ENCODE measurements at regions of chr19 and their contacts with region 1.

Region 1: DNA sequence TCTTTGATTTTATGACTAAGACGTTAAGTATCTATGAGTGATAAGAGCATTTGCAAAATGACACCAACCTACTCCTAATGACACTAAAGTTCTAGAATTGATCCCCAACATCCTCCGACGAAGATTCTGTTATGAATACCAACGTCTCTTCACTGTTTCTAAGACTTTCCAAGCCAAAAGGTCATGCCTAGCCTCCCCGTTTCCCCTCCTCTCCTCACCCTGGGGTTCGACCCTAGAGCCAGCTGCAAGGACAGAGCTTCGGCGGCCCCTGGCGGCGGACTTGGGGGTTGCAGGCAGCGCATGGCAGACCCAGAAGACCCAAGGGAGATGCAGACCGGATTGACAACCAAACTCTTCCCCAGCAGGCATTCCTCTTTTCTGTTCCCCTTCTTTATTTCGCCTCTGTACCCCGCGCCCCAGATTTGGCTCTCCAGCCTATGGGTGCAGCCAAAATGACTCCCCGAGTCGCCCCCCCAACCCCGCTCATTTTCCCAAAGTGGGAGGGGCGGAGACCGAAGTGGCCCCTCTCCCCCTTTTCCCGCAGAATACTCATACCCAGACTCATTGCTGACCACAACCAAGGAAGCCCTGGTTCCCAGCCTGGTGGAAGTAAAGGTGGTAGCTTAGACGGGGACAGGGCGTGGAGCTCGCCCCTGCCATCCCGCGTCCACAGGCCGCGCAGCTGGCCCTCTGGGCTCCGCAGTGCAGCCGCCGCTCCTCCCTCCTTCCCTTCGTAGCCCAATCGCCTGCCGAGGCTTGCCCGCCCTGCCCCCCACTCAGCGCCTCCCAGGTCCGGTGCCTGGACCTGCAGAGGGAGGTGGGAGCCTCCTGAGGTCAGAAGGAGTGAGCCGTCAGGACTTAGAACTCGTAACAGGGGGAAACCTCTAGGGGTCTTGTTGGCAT is 4.1 kb upstream of the EML2 start:
- DNase-seq: peak; percentile 81 to 93 (median 85)
- ATAC-seq: peak; percentile 46 to 62 (median 52)
- H3K4me3 ChIP-seq: peak overlapping the region in 5 of 12 donors; percentile 24 to 62 (median 60)
- H3K27ac ChIP-seq: peak overlapping the region in 2 of 12 donors; percentile 84 to 89
- H3K4me1 ChIP-seq: peaks cover 0 to 65% (median 35%) of the 10 kb centered on the region in 12 donors
- H3K27me3 ChIP-seq: peaks cover 0 to 16% (median 0%) of the 10 kb centered on the region in 9 donors
- CTCF ChIP-seq: peak; percentile 92 to 99 (median 98)
- POLR2A ChIP-seq: no peak

Region 2: GRCh38 chr19:45439569-45440254 is 203.6 kb before region 1 on chr19:
- intact Hi-C with region 1: loop called in 5 of 10 experiments (anchors 1 to 10 kb)
- DNase-seq: peak; percentile 89 to 94 (median 92)
- ATAC-seq: peak; percentile 52 to 84 (median 67)
- H3K4me3 ChIP-seq: peak overlapping the region; percentile 57 to 88 (median 69)
- H3K27ac ChIP-seq: peak overlapping the region; percentile 54 to 98 (median 95)
- H3K4me1 ChIP-seq: peaks cover 0 to 39% (median 22%) of the 10 kb centered on the region in 12 donors
- H3K27me3 ChIP-seq: no peaks in the 10 kb centered on the region
- CTCF ChIP-seq: peak; percentile 97 to 100 (median 100)
- POLR2A ChIP-seq: peak in 1 of 2 donors; percentile 52

Region 3: DNA sequence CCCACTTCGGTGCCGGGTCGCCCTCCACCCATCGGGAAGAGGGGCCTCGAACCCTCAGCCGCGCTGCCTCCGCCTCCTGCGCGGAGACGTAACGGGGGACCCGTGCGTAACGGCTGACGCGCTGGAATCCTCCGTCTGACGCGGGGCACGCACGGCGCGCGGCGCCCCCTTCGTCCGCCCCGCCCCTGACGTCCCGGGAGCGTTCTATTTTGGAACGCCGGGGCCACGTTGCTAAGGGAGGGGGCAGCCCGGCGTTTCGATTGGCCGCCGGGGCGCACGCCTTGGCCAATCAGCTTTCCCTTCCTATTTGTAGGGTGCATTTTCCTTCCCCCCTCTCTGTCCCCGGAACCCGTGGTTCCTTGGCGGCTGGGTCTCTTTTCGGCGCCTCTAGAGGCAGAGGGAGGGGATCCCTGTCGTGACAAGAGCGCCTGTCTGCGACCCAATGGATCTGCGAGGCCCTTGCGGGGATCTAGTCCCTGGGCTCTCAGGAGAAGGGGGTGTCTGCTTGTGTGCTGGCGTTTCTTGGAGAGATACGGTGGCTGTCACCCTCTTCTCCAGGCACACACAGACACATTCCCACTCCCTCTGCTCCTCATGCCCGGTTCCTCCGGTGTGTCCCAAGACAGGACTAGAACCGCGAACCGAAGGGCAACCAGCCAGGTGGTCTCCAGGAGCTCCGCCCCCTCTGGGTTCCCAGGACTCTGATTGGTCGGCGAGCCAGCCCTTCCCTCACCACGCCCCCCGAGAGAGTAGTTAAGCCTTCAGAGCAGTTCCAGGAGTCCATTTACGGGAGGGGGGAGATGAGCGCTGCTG is 173.9 kb before region 1 on chr19:
- intact Hi-C with region 1: no loop called
- DNase-seq: peak; percentile 94 to 97 (median 95)
- ATAC-seq: peak; percentile 89 to 92 (median 90)
- H3K4me3 ChIP-seq: peak overlapping the region; percentile 51 to 89 (median 72)
- H3K27ac ChIP-seq: peak overlapping the region; percentile 80 to 99 (median 95)
- H3K4me1 ChIP-seq: peaks cover 5 to 40% (median 26%) of the 10 kb centered on the region in 12 donors
- H3K27me3 ChIP-seq: peaks cover 0 to 15% (median 0%) of the 10 kb centered on the region in 9 donors
- CTCF ChIP-seq: peak in 3 of 12 donors; percentile 7 to 23 (median 15)
- POLR2A ChIP-seq: peak; percentile 50 to 97

Region 4: DNA sequence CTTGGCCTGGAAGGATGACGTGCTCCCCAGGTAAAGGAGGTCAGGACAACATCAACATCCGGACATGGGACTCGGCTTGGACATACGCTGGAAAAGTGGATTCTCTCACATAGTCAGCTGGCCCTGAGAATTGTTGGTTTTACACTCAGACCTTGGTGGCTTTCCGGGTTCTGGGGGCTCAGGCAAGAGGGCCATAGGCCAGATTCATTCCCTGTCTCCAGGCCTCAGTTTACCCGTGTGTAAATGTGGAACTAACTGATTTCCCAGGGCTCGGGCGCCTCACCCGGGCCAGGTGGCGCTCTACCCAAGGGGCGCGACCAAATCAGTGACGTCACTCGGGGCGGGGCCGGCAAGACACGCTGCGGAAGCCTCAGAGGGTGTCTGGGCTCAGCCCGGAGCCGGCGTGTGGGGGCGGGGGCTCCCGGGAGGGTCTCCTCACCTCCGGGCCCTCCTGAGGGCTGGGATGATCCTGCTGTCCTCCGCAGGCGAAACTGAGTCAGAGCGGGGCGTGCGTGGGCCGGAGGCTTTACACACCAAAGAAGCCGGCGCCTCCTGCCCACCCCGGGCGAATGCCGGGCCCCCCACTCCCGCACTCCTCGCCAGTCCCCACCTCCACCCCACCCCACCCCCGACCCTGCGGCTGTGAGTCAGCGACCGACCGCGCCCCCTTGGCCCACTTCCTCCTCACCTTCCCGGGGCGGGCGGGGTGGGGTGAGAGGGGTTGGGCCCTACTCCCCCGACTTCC is 136.9 kb before region 1 on chr19:
- intact Hi-C with region 1: loop called in 2 of 10 experiments (anchors 5 kb)
- DNase-seq: peak; percentile 95 to 98 (median 97)
- ATAC-seq: peak; percentile 71 to 86 (median 82)
- H3K4me3 ChIP-seq: peak overlapping the region; percentile 78 to 100 (median 96)
- H3K27ac ChIP-seq: peak overlapping the region; percentile 84 to 99 (median 96)
- H3K4me1 ChIP-seq: peaks cover 0 to 50% (median 19%) of the 10 kb centered on the region in 12 donors
- H3K27me3 ChIP-seq: no peaks in the 10 kb centered on the region
- CTCF ChIP-seq: peak in 11 of 12 donors; percentile 17 to 75 (median 50)
- POLR2A ChIP-seq: peak; percentile 65 to 78

Region 5: GRCh38 chr19:45584332-45585157 is 58.7 kb before region 1 on chr19 and contains the start of gene OPA3:
- intact Hi-C with region 1: loop called in 6 of 10 experiments (anchors 10 kb)
- DNase-seq: peak; percentile 100
- ATAC-seq: peak; percentile 95 to 97 (median 96)
- H3K4me3 ChIP-seq: peak within 1 kb of the TSS; percentile 52 to 85 (median 66)
- H3K27ac ChIP-seq: peak within 1 kb of the TSS; percentile 92 to 100 (median 96)
- H3K4me1 ChIP-seq: peaks cover 0 to 20% (median 13%) of the 10 kb centered on the region in 12 donors
- H3K27me3 ChIP-seq: no peaks in the 10 kb centered on the region
- CTCF ChIP-seq: peak in 3 of 12 donors; percentile 26 to 35 (median 34)
- POLR2A ChIP-seq: peak in 1 of 2 donors; percentile 71
- total RNA-seq, gene OPA3: 21.3 to 30.4 (median 22.5) TPM

Region 6: GRCh38 chr19:45607071-45608029 is 35.9 kb before region 1 on chr19:
- intact Hi-C with region 1: loop called (anchors 1 to 5 kb)
- DNase-seq: peak; percentile 77 to 85 (median 80)
- ATAC-seq: peak; percentile 78 to 90 (median 86)
- H3K4me3 ChIP-seq: peak overlapping the region in 9 of 12 donors; percentile 29 to 50 (median 41)
- H3K27ac ChIP-seq: peak overlapping the region in 11 of 12 donors; percentile 34 to 76 (median 64)
- H3K4me1 ChIP-seq: peaks cover 0 to 14% (median 9%) of the 10 kb centered on the region in 12 donors
- H3K27me3 ChIP-seq: peaks cover 0 to 12% (median 5%) of the 10 kb centered on the region in 9 donors
- CTCF ChIP-seq: peak; percentile 77 to 95 (median 88)
- POLR2A ChIP-seq: no peak

Region 7: GRCh38 chr19:45968626-45969025 is 325.4 kb after region 1 on chr19:
- intact Hi-C with region 1: no loop called
- DNase-seq: no peak
- ATAC-seq: no peak
- H3K4me3 ChIP-seq: no peak overlapping the region
- H3K27ac ChIP-seq: no peak overlapping the region
- H3K4me1 ChIP-seq: peaks cover 0 to 24% (median 4%) of the 10 kb centered on the region in 12 donors
- H3K27me3 ChIP-seq: peaks cover under 1 to 36% (median 24%) of the 10 kb centered on the region in 9 donors
- CTCF ChIP-seq: no peak
- POLR2A ChIP-seq: no peak